IMR-90 (cell line): ENCODE measurements at regions of chr6 and their contacts with region 1.

Region 1: GRCh38 chr6:131532580-131533039 is 40.4 kb upstream of the ARG1 start:
- DNase-seq: peak; percentile 4
- ATAC-seq: 0 out of 2 replicates have a peak, but pooled peaks have one; percentile 24
- H3K4me3 ChIP-seq: no peak overlapping the region
- H3K27ac ChIP-seq: no peak overlapping the region
- H3K4me1 ChIP-seq: 0 out of 2 replicates have a peak, but pooled peaks cover 1% of the 10 kb centered on the region
- H3K27me3 ChIP-seq: peaks cover 3% of the 10 kb centered on the region
- CTCF ChIP-seq: no peak
- POLR2A ChIP-seq: no peak
- RAD21 ChIP-seq: no peak

Region 2: GRCh38 chr6:131182991-131183425 is 349.6 kb before region 1 on chr6:
- CTCF ChIA-PET with region 1: interaction called, 9 read pairs
- POLR2A ChIA-PET with region 1: no interaction called
- dilution Hi-C with region 1: no loop called
- in situ Hi-C with region 1: no loop called
- intact Hi-C with region 1: loop called (anchors 1 kb)
- DNase-seq: peak; percentile 56
- ATAC-seq: peak; percentile 85
- H3K4me3 ChIP-seq: no peak overlapping the region
- H3K27ac ChIP-seq: no peak overlapping the region
- H3K4me1 ChIP-seq: peaks cover 2% of the 10 kb centered on the region; the same call in 1 of the 2 replicates
- H3K27me3 ChIP-seq: no peaks in the 10 kb centered on the region
- CTCF ChIP-seq: peak; percentile 65
- POLR2A ChIP-seq: no peak
- RAD21 ChIP-seq: peak; percentile 48

Region 3: GRCh38 chr6:131199568-131200272 is 332.9 kb before region 1 on chr6:
- CTCF ChIA-PET with region 1: interaction called, 3 read pairs
- POLR2A ChIA-PET with region 1: no interaction called
- dilution Hi-C with region 1: no loop called
- in situ Hi-C with region 1: no loop called
- intact Hi-C with region 1: loop called (anchors 1 kb)
- DNase-seq: peak; percentile 47
- ATAC-seq: peak; percentile 77
- H3K4me3 ChIP-seq: no peak overlapping the region
- H3K27ac ChIP-seq: no peak overlapping the region
- H3K4me1 ChIP-seq: no peaks in the 10 kb centered on the region
- H3K27me3 ChIP-seq: no peaks in the 10 kb centered on the region
- CTCF ChIP-seq: peak; percentile 48
- POLR2A ChIP-seq: no peak
- RAD21 ChIP-seq: peak; percentile 52